Naive thymus-derived CD8-positive, alpha-beta T cell (primary cell): ENCODE measurements at regions of chr9 and their contacts with region 1.

Region 1: GRCh38 chr9:37119907-37120842 is at the start of gene ZCCHC7:
- DNase-seq: peak; percentile 93 to 99 (median 97)
- ATAC-seq: peak; percentile 93 to 95
- H3K4me3 Mint-ChIP-seq: peak within 1 kb of the TSS; percentile 86 to 99 (median 96)
- H3K27ac Mint-ChIP-seq: peak within 1 kb of the TSS; percentile 91 to 99 (median 98)
- H3K4me1 Mint-ChIP-seq: peaks cover 18 to 43% (median 35%) of the 10 kb centered on the region in 4 donors
- H3K27me3 Mint-ChIP-seq: peaks cover 0 to 2% (median 0%) of the 10 kb centered on the region in 5 donors
- polyA plus RNA-seq, gene ZCCHC7: 27.2 to 40.2 (median 38.1) TPM

Region 2: GRCh38 chr9:37079370-37080164 is 40.6 kb before region 1 on chr9:
- POLR2A ChIA-PET with region 1: interaction called, 37 read pairs
- DNase-seq: peak; percentile 80 to 97 (median 92)
- ATAC-seq: peak; percentile 94 to 96
- H3K4me3 Mint-ChIP-seq: peak overlapping the region; percentile 94 to 99 (median 97)
- H3K27ac Mint-ChIP-seq: peak overlapping the region; percentile 96 to 99 (median 98)
- H3K4me1 Mint-ChIP-seq: peaks cover 14 to 66% (median 44%) of the 10 kb centered on the region in 4 donors
- H3K27me3 Mint-ChIP-seq: peaks cover 0 to 3% (median 1%) of the 10 kb centered on the region in 5 donors

Region 3: DNA sequence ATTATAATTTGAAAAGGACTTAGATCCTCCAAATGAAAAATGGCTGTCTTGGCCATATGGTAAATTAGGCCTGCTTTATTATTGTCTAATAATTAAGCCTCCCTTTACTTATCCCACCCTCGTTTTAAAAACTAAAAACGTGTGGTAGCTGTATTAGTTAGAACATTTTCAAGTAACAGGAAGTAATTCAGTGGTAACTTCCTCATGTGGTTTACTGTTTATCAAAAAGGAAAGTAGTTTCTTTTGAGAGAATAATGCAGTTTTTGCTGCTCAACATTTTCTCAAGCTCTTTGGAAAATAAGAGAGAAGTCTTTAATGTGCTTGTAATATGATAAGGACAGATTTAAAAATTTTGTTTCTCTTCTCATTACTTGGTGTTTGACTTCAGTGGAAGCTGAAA is 26.2 kb after region 1 on chr9:
- POLR2A ChIA-PET with region 1: interaction called, 19 read pairs
- DNase-seq: peak in 3 of 10 donors; percentile 53 to 62 (median 59)
- ATAC-seq: peak; percentile 90 to 91
- H3K4me3 Mint-ChIP-seq: peak overlapping the region; percentile 40 to 82 (median 68)
- H3K27ac Mint-ChIP-seq: peak overlapping the region; percentile 41 to 93 (median 88)
- H3K4me1 Mint-ChIP-seq: peaks cover 12 to 63% (median 46%) of the 10 kb centered on the region in 4 donors
- H3K27me3 Mint-ChIP-seq: no peaks in the 10 kb centered on the region